ENCODE measurements at regions of chr11 and their contacts with region 1.

Region 1: GRCh38 chr11:77091146-77091940 is 11.3 kb upstream of the OMP start:
- DNase-seq: peak; percentile 70 to 88 (median 84)
- H3K4me3 ChIP-seq: no peak overlapping the region
- H3K27ac ChIP-seq: no peak overlapping the region
- H3K4me1 ChIP-seq: peaks cover 7% of the 10 kb centered on the region
- H3K27me3 ChIP-seq: no peaks in the 10 kb centered on the region
- CTCF ChIP-seq: peak; percentile 83 to 95 (median 89)
- EP300 ChIP-seq: no peak
- POLR2A ChIP-seq: no peak

Region 2: GRCh38 chr11:77047007-77047927 is 44.1 kb before region 1 on chr11:
- intact Hi-C with region 1: loop called (anchors 2 to 5 kb)
- DNase-seq: peak; percentile 58 to 87 (median 76)
- H3K4me3 ChIP-seq: peak overlapping the region; percentile 35
- H3K27ac ChIP-seq: no peak overlapping the region
- H3K4me1 ChIP-seq: peaks cover 4% of the 10 kb centered on the region
- H3K27me3 ChIP-seq: no peaks in the 10 kb centered on the region
- CTCF ChIP-seq: peak; percentile 61 to 83 (median 82)
- EP300 ChIP-seq: no peak
- POLR2A ChIP-seq: no peak

Measured in ovary (tissue), 10 donors.